CD8-positive, alpha-beta memory T cell (primary cell): ENCODE measurements at regions of chr7 and their contacts with region 1.

Region 1: DNA sequence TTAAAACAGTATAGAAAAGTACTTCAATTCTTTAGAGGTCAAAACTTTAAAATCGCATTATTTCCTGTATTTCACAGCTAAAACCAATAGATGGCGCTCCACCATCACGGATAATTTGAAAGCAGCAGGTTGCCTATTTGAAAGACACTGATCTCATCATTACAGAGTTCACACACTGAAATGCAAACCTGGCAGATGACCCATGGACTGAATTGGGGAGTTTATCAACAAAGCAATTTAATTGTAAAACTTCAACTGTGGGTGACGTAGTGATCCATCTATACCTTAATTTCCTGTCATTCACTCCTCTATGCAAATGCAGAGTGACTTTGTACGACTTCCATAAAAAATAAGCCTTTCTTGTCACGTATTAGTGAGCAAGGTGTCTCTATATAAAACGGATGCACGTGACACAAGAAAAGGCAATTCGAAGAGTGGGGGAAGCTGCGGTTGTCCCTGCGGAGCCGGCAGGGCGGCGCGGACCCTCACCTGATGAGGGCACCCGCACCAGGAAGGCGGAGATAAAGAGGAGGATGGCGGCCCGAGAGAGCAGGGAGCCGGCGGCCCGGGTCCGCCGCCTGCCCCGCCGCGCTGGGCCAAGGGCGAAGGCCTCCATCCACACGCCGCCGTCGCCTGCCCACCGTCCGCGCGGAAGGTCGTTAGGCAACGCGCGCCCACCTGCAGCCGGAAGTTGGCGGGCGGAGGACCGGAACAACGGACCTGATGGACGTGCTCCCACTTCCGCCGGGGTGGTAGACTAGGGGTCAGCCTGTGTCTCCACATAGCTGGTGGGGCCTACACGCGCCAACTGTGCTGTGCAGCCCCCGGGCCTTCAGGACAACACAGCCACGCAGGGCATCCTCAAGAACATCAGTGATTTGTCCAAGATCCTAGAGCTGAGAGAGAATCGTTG is at the start of gene ZPBP:
- DNase-seq: peak in 4 of 5 donors; percentile 25 to 66 (median 60)
- H3K4me3 ChIP-seq: peak within 1 kb of the TSS; percentile 54
- H3K4me3 Mint-ChIP-seq: peak within 1 kb of the TSS; percentile 85 to 94 (median 90)
- H3K27ac ChIP-seq: no peak within 1 kb of the TSS
- H3K27ac Mint-ChIP-seq: peak within 1 kb of the TSS in 6 of 8 donors; percentile 24 to 85 (median 82)
- H3K4me1 ChIP-seq: no peaks in the 10 kb centered on the region
- H3K4me1 Mint-ChIP-seq: peaks cover 6 to 13% (median 7%) of the 10 kb centered on the region in 3 donors
- H3K27me3 ChIP-seq: no peaks in the 10 kb centered on the region
- H3K27me3 Mint-ChIP-seq: peaks cover 0 to under 1% of the 10 kb centered on the region in 2 donors
- total RNA-seq, gene ZPBP: 0.22 TPM in 1 of 2 experiments, not detected in the other

Region 2: DNA sequence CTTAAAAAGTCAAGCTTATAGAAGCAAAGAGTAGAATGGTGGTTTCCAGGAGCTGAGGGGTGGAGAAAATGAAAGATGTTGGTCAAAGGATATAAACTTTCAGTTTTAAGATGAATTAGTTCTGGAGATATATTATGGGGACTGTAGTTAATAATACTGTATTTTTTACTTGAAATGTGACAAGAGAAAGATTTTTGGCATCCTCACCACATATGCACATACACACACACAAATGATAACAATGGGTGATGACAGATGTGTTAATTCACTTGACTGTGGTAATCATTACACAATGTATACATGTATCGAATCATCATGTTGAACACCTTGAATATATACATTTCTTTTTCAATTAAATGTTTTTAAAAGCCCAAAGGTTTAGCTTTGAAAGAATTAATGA is 32.9 kb after region 1 on chr7:
- CTCF ChIA-PET with region 1: no interaction called
- POLR2A ChIA-PET with region 1: no interaction called
- DNase-seq: no peak
- H3K4me3 ChIP-seq: no peak overlapping the region
- H3K4me3 Mint-ChIP-seq: no peak overlapping the region
- H3K27ac ChIP-seq: no peak overlapping the region
- H3K27ac Mint-ChIP-seq: no peak overlapping the region
- H3K4me1 ChIP-seq: no peaks in the 10 kb centered on the region
- H3K4me1 Mint-ChIP-seq: no peaks in the 10 kb centered on the region
- H3K27me3 ChIP-seq: no peaks in the 10 kb centered on the region
- H3K27me3 Mint-ChIP-seq: peaks cover 2 to 3% of the 10 kb centered on the region in 2 donors

Region 3: DNA sequence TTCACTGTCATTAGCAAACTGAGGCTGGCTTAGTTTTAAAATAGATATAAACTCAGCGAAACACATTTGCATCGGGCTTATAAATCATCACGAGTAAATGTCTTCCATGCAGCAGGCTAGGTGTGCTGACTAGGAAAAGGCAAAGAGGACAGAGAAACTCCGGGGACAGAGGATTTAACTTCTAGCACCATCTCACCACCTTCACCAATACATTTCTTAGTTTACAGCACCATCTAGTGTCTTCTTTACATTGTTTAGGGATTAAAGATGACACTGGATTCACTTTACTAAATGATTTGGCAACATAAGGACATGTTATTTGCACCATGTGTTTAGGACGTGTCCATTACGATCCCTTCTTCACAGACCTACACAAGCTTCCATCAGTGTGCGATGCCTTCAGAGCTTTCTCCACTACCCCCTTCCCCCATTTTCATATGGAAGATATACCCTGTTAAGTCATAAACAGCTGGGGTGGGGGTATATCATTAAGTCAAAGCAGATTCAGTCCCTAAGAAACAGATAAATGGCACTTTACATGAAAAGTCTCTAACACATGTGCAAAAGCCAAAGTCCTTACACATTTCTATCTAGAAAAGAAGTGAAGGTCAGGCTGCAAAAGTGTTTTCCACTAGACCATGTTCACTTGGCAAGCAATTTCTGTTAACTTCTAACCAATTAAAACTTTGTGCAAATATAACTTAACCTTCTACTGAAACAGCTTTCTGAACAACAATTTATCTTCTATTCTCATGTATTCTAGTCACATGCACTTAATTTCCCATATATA is 586.6 kb after region 1 on chr7:
- CTCF ChIA-PET with region 1: interaction called, 20 read pairs
- POLR2A ChIA-PET with region 1: no interaction called
- DNase-seq: peak in 2 of 5 donors; percentile 50 to 54
- H3K4me3 ChIP-seq: no peak overlapping the region
- H3K4me3 Mint-ChIP-seq: no peak overlapping the region
- H3K27ac ChIP-seq: no peak overlapping the region
- H3K27ac Mint-ChIP-seq: no peak overlapping the region
- H3K4me1 ChIP-seq: no peaks in the 10 kb centered on the region
- H3K4me1 Mint-ChIP-seq: peaks cover 0 to 3% (median 3%) of the 10 kb centered on the region in 3 donors
- H3K27me3 ChIP-seq: no peaks in the 10 kb centered on the region
- H3K27me3 Mint-ChIP-seq: peaks cover 6 to 27% of the 10 kb centered on the region in 2 donors

Region 4: DNA sequence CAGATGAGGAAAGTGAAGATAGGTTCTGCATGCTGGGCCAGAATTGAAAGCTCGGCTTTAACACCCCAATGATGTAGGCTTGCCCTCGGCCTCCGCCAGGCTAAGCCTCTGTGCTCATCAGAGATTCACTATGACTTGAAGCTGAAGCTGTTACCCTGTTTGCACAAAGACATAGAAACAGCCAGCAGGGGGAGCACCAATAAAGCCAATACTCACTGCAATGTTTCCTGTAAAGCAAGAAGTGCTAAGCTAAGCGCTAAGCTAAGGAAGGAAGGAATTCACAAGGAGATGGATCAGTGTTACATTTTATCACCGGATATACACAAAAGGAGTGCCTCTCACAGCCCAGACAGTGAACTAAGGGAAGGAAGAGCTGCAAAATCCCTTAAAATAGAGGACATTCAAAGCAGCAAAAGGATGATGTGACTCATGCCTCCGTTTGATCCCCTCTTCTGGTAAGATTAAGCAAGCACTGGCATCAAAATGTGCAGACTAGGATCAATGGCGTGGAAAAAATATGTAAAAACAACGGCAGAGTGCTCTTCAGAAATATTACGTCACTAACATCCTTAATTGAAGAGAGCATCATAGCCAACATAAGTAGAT is 1070.0 kb after region 1 on chr7:
- CTCF ChIA-PET with region 1: interaction called, 10 read pairs
- POLR2A ChIA-PET with region 1: no interaction called
- DNase-seq: peak; percentile 16 to 56 (median 35)
- H3K4me3 ChIP-seq: no peak overlapping the region
- H3K4me3 Mint-ChIP-seq: no peak overlapping the region
- H3K27ac ChIP-seq: no peak overlapping the region
- H3K27ac Mint-ChIP-seq: no peak overlapping the region
- H3K4me1 ChIP-seq: no peaks in the 10 kb centered on the region
- H3K4me1 Mint-ChIP-seq: peaks cover 0 to 5% (median 1%) of the 10 kb centered on the region in 3 donors
- H3K27me3 ChIP-seq: no peaks in the 10 kb centered on the region
- H3K27me3 Mint-ChIP-seq: peaks cover 5 to 27% of the 10 kb centered on the region in 2 donors